Esophagus muscularis mucosa (tissue), 4 donors: ENCODE measurements at regions of chr16 and their contacts with region 1.

Region 1: GRCh38 chr16:11977376-11978041 is 975 bp downstream of the SNX29 start:
- DNase-seq: no peak
- H3K4me3 ChIP-seq: peak overlapping the region; percentile 73 to 98 (median 87)
- H3K27ac ChIP-seq: peak overlapping the region; percentile 84 to 88 (median 86)
- H3K4me1 ChIP-seq: peaks cover 23 to 31% (median 29%) of the 10 kb centered on the region in 4 donors
- H3K27me3 ChIP-seq: no peaks in the 10 kb centered on the region
- CTCF ChIP-seq: no peak
- EP300 ChIP-seq: no peak
- POLR2A ChIP-seq: no peak

Region 2: DNA sequence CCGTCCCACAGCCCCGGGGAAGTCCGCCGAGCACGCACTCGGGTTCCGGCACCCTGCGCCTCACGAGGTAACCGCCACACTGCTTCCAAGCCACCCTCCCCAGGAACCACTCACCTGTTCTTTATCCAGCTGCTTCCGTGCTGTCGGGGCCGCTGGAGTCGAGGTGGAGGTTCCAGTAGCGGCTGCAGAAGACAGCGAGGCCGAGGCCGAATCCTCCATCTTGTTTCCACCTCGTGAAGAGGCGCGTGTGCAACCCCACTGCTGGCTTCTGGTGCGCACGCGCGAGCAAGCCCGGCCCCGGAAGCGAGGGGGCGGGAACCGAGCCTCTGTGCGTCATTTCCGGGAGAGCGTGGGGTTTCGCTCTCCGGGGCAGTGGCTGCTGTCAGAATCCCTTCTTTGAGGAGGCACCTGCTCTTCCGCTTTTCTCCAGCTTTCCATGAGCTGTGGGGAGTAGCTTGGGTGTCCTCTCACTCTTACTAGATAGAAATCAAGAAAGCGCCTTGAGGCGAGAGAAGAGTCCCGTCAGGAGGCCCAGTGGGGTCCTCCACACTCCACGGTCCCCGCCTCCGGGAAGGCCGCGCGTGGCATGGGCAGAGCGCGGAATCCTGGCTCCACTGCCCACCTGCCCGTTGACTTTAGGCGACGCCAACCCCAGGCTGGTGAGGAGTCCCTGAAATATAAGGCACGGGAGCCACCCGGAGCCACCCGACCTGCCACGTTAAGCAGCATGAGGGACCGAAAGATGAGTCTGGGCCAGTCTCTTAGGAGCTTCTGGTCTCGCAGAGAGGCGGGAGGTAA is 126.0 kb before region 1 on chr16 and contains the start of gene RSL1D1:
- intact Hi-C with region 1: loop called (anchors 5 kb)
- DNase-seq: peak; percentile 97
- H3K4me3 ChIP-seq: peak within 1 kb of the TSS; percentile 71 to 99 (median 92)
- H3K27ac ChIP-seq: peak within 1 kb of the TSS; percentile 85 to 94 (median 92)
- H3K4me1 ChIP-seq: peaks cover 38 to 63% (median 55%) of the 10 kb centered on the region in 4 donors
- H3K27me3 ChIP-seq: no peaks in the 10 kb centered on the region
- CTCF ChIP-seq: no peak
- EP300 ChIP-seq: no peak
- POLR2A ChIP-seq: peak; percentile 76
- total RNA-seq, gene RSL1D1: 73.9 to 125 (median 97.1) TPM

Region 3: DNA sequence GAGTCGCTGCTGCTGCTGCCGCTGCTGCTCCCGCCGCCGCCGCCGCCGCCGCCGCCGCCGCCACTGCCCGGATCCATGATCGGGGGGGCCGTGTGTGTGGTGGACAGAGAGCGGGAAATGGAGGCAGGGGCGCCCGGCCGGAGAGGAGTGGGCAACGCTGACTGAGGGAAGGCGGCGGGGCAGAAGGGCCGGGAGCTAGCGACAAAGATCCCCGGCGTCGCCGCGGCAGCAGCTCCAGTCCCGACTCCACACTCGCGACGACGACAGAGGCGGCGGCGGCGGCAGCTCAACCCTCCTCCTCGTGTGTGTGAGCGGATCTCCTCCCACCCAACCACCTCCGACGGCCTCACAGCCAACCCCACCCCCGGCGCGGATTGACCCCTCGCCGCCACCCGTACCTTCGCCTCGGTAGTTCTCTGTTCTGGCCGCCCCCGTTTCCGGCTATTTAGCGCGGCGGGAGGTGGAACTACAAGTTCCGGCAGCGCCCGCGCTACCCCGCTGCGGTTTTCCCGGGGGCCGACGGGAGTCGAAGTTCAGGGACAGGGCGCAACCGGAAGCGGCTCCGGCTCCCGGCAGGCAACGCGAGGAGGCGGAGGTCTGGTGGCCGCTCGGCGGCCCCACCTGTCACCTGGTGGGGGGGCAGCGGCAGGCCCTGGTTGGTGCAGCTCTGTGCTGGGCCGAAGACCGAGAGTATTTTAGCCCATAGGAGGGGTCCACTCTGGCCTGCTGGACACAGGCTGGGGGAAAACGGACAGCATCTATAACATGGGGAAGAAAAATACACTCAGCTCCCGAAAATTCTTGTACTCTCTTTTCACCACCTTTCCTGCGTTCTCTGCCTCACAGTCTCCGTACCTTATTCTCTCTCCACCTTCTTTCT is 61.6 kb before region 1 on chr16 and contains the start of gene GSPT1:
- intact Hi-C with region 1: loop called (anchors 2 kb)
- DNase-seq: peak; percentile 100
- H3K4me3 ChIP-seq: peak within 1 kb of the TSS; percentile 96 to 98 (median 97)
- H3K27ac ChIP-seq: peak within 1 kb of the TSS; percentile 95 to 99 (median 96)
- H3K4me1 ChIP-seq: peaks cover 37 to 42% (median 41%) of the 10 kb centered on the region in 4 donors
- H3K27me3 ChIP-seq: no peaks in the 10 kb centered on the region
- CTCF ChIP-seq: peak in 2 of 3 experiments; percentile 23
- EP300 ChIP-seq: no peak
- POLR2A ChIP-seq: peak; percentile 86
- total RNA-seq, gene GSPT1: 55.2 to 71.7 (median 66.5) TPM

Region 4: DNA sequence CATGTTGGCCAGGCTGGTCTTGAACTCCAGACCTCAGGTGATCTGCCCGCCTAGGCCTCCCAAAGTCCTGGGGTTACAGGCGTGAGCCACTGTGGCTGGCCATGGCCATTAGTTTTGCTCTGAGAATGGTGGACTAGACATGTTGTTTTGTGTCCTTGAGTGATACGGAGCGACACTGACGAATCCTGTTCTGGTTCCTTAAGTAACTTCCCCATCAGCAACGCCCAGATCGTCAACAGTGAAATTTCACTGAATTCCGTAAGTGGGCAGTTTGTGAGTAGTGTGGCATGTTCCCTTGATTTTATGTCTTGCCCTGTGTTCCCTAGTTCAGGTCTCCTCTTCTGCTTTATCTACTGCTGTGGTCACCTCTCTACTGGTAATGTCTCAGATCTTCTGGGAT is 66.4 kb after region 1 on chr16:
- intact Hi-C with region 1: no loop called
- DNase-seq: no peak
- H3K4me3 ChIP-seq: no peak overlapping the region
- H3K27ac ChIP-seq: no peak overlapping the region
- H3K4me1 ChIP-seq: no peaks in the 10 kb centered on the region
- H3K27me3 ChIP-seq: no peaks in the 10 kb centered on the region
- CTCF ChIP-seq: no peak
- EP300 ChIP-seq: no peak
- POLR2A ChIP-seq: no peak

Region 5: GRCh38 chr16:12067714-12068401 is 90.3 kb after region 1 on chr16:
- intact Hi-C with region 1: loop called (anchors 5 kb)
- DNase-seq: no peak
- H3K4me3 ChIP-seq: no peak overlapping the region
- H3K27ac ChIP-seq: no peak overlapping the region
- H3K4me1 ChIP-seq: peaks cover 6 to 17% (median 11%) of the 10 kb centered on the region in 4 donors
- H3K27me3 ChIP-seq: no peaks in the 10 kb centered on the region
- CTCF ChIP-seq: peak; percentile 90 to 97 (median 94)
- EP300 ChIP-seq: no peak
- POLR2A ChIP-seq: no peak